Esophagus squamous epithelium (tissue), 5 donors: ENCODE measurements at regions of chr6 and their contacts with region 1.

Region 1: DNA sequence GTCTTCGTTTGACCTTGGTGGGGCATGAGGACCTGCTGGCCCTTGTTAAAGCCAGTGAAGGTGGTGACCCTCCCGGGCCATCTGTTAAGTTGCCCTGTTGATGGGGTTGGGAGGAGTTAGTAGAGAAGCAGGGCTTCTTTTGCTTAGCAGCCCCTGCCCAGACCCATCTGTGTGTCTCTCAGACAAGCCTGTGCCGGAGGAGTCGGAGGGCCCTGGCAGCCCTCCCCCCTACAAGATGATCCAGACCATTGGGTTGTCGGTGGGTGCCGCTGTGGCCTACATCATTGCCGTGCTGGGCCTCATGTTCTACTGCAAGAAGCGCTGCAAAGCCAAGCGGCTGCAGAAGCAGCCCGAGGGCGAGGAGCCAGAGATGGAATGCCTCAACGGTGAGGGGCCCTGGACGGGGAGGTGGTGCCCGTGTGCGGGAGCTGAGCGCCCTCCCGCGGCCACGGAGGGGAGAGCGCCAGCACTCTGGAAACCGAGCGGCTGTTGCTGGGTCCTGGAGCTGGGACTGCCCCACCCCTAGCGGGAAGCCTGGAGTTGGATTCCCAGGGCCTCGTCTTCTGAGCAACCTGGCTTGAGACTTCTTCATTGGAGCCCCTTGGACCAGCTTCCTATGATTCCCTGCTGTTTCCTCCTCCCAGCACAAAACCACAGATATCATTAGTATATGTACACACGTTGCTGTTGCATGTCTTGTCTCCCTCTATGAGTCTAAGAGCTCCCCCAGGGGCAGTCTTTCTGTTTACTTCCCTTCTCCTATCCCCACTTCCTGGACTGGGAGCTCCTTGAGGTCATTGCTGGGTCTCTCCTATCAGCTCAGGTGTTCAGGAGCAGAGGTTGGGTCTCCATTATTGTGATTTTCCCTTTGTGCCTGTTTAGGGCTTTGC is 27.6 kb upstream of the SRF start:
- DNase-seq: no peak
- H3K4me3 ChIP-seq: no peak overlapping the region
- H3K27ac ChIP-seq: peak overlapping the region in 3 of 4 donors; percentile 32 to 61 (median 38)
- H3K4me1 ChIP-seq: peaks cover 0 to 17% (median 11%) of the 10 kb centered on the region in 3 donors
- H3K27me3 ChIP-seq: no peaks in the 10 kb centered on the region
- CTCF ChIP-seq: peak; percentile 83 to 98 (median 92)
- POLR2A ChIP-seq: no peak

Region 2: DNA sequence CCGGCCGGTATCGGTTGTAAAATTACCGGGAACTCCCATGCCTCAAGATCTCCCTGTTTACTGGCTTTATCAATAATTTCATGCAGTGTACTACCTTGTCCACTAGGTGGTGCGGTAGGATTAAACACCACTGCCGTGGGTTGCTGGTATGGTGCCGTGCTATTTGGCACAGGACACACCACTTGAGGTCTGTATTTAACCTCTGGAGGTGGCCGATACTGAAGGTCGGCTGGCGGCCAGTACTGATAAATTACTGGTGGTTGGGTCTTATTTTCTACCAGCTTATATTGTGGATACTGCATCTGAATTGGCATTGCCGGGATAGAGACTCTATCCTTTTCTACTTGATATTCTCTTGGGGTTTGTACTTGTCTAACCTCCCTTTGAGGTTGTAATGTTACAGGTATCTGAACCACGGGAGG is 241.9 kb before region 1 on chr6:
- intact Hi-C with region 1: loop called (anchors 10 kb)
- DNase-seq: peak; percentile 18
- H3K4me3 ChIP-seq: peak overlapping the region in 3 of 4 donors; percentile 22 to 51 (median 27)
- H3K27ac ChIP-seq: peak overlapping the region in 2 of 4 donors; percentile 37 to 43
- H3K4me1 ChIP-seq: peaks cover 4 to 34% (median 4%) of the 10 kb centered on the region in 3 donors
- H3K27me3 ChIP-seq: no peaks in the 10 kb centered on the region
- CTCF ChIP-seq: peak; percentile 81 to 96 (median 94)
- POLR2A ChIP-seq: no peak

Region 3: GRCh38 chr6:43070028-43070632 is 73.3 kb before region 1 on chr6:
- intact Hi-C with region 1: loop called (anchors 5 kb)
- DNase-seq: no peak
- H3K4me3 ChIP-seq: no peak overlapping the region
- H3K27ac ChIP-seq: no peak overlapping the region
- H3K4me1 ChIP-seq: peaks cover 0 to 7% (median 0%) of the 10 kb centered on the region in 3 donors
- H3K27me3 ChIP-seq: no peaks in the 10 kb centered on the region
- CTCF ChIP-seq: peak in 4 of 6 experiments; percentile 43 to 54 (median 48)
- POLR2A ChIP-seq: no peak

Region 4: GRCh38 chr6:43584892-43585570 is 441.6 kb after region 1 on chr6:
- intact Hi-C with region 1: no loop called
- DNase-seq: no peak
- H3K4me3 ChIP-seq: no peak overlapping the region
- H3K27ac ChIP-seq: no peak overlapping the region
- H3K4me1 ChIP-seq: no peaks in the 10 kb centered on the region
- H3K27me3 ChIP-seq: no peaks in the 10 kb centered on the region
- CTCF ChIP-seq: no peak
- POLR2A ChIP-seq: no peak